Activated T-helper 2 cell treated with anti-CD3 and anti-CD28 coated beads, Interferon-gamma antibody, Interleukin-2, Interleukin-4, amounts not matched to agents 10 μg/mL and 5 μg/mL and 100 μg/mL, durations not matched to agents 14 hours and 24 hours and 36 hours (primary cell): ENCODE measurements at regions of chr7 and their contacts with region 1.

Region 1: DNA sequence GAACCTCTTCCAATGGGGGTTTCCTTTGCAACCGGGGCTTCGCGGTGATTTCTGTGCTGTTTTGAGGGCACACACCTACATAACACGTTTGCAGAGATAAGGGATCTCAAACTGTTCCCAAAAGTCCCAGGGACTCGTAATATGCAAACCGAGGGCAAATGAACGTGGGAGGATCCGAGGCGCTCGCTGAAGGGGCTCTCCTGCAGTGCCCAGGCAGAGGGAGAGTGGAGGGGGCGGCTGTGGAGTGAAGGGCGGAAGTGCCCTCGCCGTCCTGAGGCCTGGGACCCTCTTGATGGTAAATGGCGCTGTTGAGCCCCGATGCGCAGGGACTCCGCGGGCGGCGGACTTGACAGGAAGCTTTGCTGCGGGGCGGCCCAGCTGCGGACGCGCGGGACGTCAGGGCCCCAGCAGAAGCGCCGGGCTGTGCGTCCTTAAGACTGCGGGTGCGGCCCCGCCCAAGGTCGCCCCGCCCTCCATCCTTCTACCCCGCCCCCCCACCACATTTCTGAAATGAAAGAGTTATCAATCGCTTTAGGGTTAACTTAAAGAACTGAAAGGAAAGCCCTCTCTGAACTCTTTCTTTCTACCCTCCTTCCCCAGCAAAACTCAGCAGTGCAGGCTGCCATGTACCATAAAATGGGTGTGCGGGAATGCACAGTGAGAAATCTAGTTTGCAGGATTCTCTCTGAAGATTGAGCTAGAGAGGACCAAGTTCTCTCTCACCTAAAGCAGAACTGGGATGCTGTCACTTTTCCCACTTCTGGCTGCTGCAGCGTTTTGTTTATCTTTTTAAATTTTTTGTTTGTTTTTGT is 151.8 kb upstream of the YAE1 start:
- DNase-seq: peak; percentile 33
- H3K4me3 Mint-ChIP-seq: peak overlapping the region; percentile 64
- H3K27ac Mint-ChIP-seq: no peak overlapping the region
- H3K4me1 Mint-ChIP-seq: peaks cover 1% of the 10 kb centered on the region
- H3K27me3 Mint-ChIP-seq: peaks cover 42% of the 10 kb centered on the region

Region 2: DNA sequence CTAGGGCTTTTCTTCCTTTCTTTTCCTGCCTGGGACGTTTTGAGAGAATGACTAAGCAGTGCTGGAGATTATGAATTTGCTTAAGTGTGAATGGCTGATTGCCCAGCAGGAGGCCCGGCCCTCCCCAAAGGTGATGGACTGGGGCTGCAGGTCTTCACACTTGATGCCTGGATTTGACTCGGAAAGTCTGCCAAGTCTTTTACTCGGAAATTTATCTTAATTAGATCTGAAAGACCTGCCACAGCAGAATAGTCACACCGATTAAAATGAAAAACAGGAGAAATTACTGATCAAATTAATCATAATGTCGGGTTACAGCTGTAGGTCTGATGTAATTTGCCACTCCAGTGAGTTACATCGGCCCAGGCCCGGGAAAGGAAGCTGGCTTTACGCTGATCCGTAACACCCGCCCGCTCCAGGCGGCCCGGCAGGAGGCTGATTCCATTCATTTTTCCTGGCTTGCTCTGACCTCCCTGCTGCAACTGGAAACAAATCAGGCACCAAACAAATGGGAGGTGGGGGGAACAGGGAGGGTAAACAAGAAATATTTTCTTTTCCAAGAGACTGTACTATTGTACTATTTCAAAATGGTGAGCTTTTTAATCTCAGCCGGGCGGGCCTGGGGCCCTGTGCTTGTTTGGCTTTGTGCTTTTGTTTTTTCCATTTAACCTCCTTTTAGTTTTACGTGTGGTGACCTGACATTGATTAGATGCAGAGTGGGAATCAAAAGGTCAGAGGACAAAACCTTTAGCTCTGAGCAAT is 60.6 kb before region 1 on chr7:
- intact Hi-C with region 1: loop called (anchors 10 kb)
- DNase-seq: no peak
- H3K4me3 Mint-ChIP-seq: no peak overlapping the region
- H3K27ac Mint-ChIP-seq: no peak overlapping the region
- H3K4me1 Mint-ChIP-seq: peaks cover 4% of the 10 kb centered on the region
- H3K27me3 Mint-ChIP-seq: no peaks in the 10 kb centered on the region

Region 3: DNA sequence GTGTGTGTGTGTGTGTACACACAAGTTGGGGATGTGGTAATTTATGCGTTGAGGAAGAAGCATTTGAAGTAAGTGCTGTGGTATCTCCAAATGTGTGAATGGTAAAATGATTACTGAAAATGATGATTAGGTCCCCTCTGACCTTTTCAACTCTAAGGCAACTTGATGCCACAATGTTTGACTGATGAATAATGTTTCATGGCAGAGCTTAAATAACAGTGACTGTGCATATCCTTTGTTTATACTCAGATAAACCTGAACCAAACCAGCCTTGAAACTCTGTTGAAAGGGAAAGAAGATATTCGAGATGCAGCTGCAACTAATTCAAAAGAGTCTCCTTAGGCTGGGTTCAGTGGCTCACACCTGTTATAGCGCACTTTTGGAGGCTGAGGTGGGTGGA is 86.9 kb after region 1 on chr7:
- intact Hi-C with region 1: no loop called
- DNase-seq: no peak
- H3K4me3 Mint-ChIP-seq: no peak overlapping the region
- H3K27ac Mint-ChIP-seq: no peak overlapping the region
- H3K4me1 Mint-ChIP-seq: no peaks in the 10 kb centered on the region
- H3K27me3 Mint-ChIP-seq: peaks cover 9% of the 10 kb centered on the region